Activated CD8-positive, alpha-beta T cell treated with anti-CD3 and anti-CD28 coated beads for 36 hours (primary cell): ENCODE measurements at regions of chr2 and their contacts with region 1.

Region 1: GRCh38 chr2:85642725-85643124 is 25.3 kb downstream of the SFTPB start:
- DNase-seq: peak; percentile 27
- ATAC-seq: peak; percentile 72
- H3K4me3 Mint-ChIP-seq: no peak overlapping the region
- H3K27ac Mint-ChIP-seq: peak overlapping the region; percentile 70
- H3K4me1 Mint-ChIP-seq: peaks cover 12% of the 10 kb centered on the region
- H3K27me3 Mint-ChIP-seq: no peaks in the 10 kb centered on the region
- CTCF ChIP-seq: no peak

Region 2: GRCh38 chr2:85475799-85476490 is 166.8 kb before region 1 on chr2:
- CTCF ChIA-PET with region 1: no interaction called
- POLR2A ChIA-PET with region 1: no interaction called
- intact Hi-C with region 1: no loop called
- DNase-seq: no peak
- ATAC-seq: no peak
- H3K4me3 Mint-ChIP-seq: no peak overlapping the region
- H3K27ac Mint-ChIP-seq: no peak overlapping the region
- H3K4me1 Mint-ChIP-seq: no peaks in the 10 kb centered on the region
- H3K27me3 Mint-ChIP-seq: no peaks in the 10 kb centered on the region
- CTCF ChIP-seq: no peak

Region 3: GRCh38 chr2:85490861-85491755 is 151.6 kb before region 1 on chr2:
- CTCF ChIA-PET with region 1: no interaction called
- POLR2A ChIA-PET with region 1: no interaction called
- intact Hi-C with region 1: no loop called
- DNase-seq: no peak
- ATAC-seq: no peak
- H3K4me3 Mint-ChIP-seq: no peak overlapping the region
- H3K27ac Mint-ChIP-seq: no peak overlapping the region
- H3K4me1 Mint-ChIP-seq: no peaks in the 10 kb centered on the region
- H3K27me3 Mint-ChIP-seq: no peaks in the 10 kb centered on the region
- CTCF ChIP-seq: no peak

Region 4: DNA sequence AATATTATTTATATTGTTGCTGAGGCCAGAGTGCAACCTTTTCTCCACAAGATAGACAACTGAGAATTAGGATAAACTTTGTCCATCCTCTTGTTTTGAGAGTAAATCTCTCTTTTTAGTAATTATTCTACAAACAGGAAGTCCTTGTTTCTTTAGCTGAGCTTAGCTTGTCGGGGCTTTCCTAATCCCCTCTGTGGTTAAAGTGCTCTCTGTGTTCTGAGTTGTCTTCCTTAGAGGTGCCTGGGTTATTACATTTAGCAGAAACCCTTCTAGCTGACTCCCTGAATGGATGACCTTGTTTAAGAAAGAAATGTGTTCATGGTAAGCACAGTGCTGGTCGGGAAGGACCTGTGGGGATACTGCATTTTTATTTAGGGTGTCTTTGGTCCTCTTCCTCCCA is 14.1 kb before region 1 on chr2:
- CTCF ChIA-PET with region 1: interaction called, 61 read pairs
- POLR2A ChIA-PET with region 1: interaction called, 3 read pairs
- intact Hi-C with region 1: no loop called
- DNase-seq: peak; percentile 28
- ATAC-seq: peak; percentile 94
- H3K4me3 Mint-ChIP-seq: no peak overlapping the region
- H3K27ac Mint-ChIP-seq: peak overlapping the region; percentile 81
- H3K4me1 Mint-ChIP-seq: peaks cover 17% of the 10 kb centered on the region
- H3K27me3 Mint-ChIP-seq: no peaks in the 10 kb centered on the region
- CTCF ChIP-seq: no peak

Region 5: GRCh38 chr2:85945576-85945975 is 302.9 kb after region 1 on chr2:
- CTCF ChIA-PET with region 1: no interaction called
- POLR2A ChIA-PET with region 1: no interaction called
- intact Hi-C with region 1: no loop called
- DNase-seq: no peak
- ATAC-seq: no peak
- H3K4me3 Mint-ChIP-seq: no peak overlapping the region
- H3K27ac Mint-ChIP-seq: no peak overlapping the region
- H3K4me1 Mint-ChIP-seq: no peaks in the 10 kb centered on the region
- H3K27me3 Mint-ChIP-seq: no peaks in the 10 kb centered on the region
- CTCF ChIP-seq: no peak